ENCODE measurements at regions of chr5 and their contacts with region 1.

Region 1: GRCh38 chr5:80109646-80110478 is 74.7 kb downstream of the THBS4 start:
- DNase-seq: no peak
- ATAC-seq: no peak
- H3K4me3 ChIP-seq: no peak overlapping the region
- H3K4me3 Mint-ChIP-seq: peak overlapping the region; percentile 40
- H3K27ac ChIP-seq: no peak overlapping the region
- H3K27ac Mint-ChIP-seq: peak overlapping the region; percentile 76
- H3K4me1 ChIP-seq: peaks cover 13% of the 10 kb centered on the region
- H3K4me1 Mint-ChIP-seq: peaks cover 60% of the 10 kb centered on the region
- H3K27me3 ChIP-seq: no peaks in the 10 kb centered on the region
- H3K27me3 Mint-ChIP-seq: no peaks in the 10 kb centered on the region
- CTCF ChIP-seq: no peak

Region 2: GRCh38 chr5:79241535-79241979 is 868.3 kb before region 1 on chr5:
- CTCF ChIA-PET with region 1: no interaction called
- POLR2A ChIA-PET with region 1: no interaction called
- intact Hi-C with region 1: no loop called
- DNase-seq: no peak
- ATAC-seq: no peak
- H3K4me3 ChIP-seq: no peak overlapping the region
- H3K4me3 Mint-ChIP-seq: peak overlapping the region; percentile 67
- H3K27ac ChIP-seq: no peak overlapping the region
- H3K27ac Mint-ChIP-seq: no peak overlapping the region
- H3K4me1 ChIP-seq: peaks cover 64% of the 10 kb centered on the region
- H3K4me1 Mint-ChIP-seq: peaks cover 81% of the 10 kb centered on the region
- H3K27me3 ChIP-seq: no peaks in the 10 kb centered on the region
- H3K27me3 Mint-ChIP-seq: no peaks in the 10 kb centered on the region
- CTCF ChIP-seq: no peak

Region 3: DNA sequence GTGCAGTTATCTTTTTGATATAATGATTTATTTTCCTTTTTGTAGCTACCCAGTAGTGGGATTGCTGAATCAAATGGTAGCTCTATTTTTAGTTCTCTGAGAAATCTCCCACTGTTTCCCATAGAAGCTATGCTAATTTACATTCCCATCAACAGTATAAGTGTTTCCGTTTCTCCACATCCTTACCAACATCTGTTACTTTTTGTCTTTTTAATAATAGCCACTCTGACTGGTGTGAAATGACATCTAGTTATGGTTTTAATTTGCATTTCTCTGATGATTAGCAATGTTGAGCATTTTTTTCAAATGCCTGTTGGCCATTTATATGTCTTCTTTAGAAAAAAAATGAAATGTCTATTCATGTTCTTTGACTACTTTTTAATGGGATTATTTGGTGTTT is 51.3 kb after region 1 on chr5:
- CTCF ChIA-PET with region 1: no interaction called
- POLR2A ChIA-PET with region 1: no interaction called
- intact Hi-C with region 1: loop called in 1 of 2 experiments (anchors 5 kb)
- DNase-seq: no peak
- ATAC-seq: no peak
- H3K4me3 ChIP-seq: no peak overlapping the region
- H3K4me3 Mint-ChIP-seq: no peak overlapping the region
- H3K27ac ChIP-seq: no peak overlapping the region
- H3K27ac Mint-ChIP-seq: peak overlapping the region; percentile 24
- H3K4me1 ChIP-seq: peaks cover 16% of the 10 kb centered on the region
- H3K4me1 Mint-ChIP-seq: peaks cover 42% of the 10 kb centered on the region
- H3K27me3 ChIP-seq: no peaks in the 10 kb centered on the region
- H3K27me3 Mint-ChIP-seq: no peaks in the 10 kb centered on the region
- CTCF ChIP-seq: no peak

Measured in CD8-positive, alpha-beta T cell (primary cell).